AG04449 (cell line): ENCODE measurements at regions of chr15 and their contacts with region 1.

Region 1: DNA sequence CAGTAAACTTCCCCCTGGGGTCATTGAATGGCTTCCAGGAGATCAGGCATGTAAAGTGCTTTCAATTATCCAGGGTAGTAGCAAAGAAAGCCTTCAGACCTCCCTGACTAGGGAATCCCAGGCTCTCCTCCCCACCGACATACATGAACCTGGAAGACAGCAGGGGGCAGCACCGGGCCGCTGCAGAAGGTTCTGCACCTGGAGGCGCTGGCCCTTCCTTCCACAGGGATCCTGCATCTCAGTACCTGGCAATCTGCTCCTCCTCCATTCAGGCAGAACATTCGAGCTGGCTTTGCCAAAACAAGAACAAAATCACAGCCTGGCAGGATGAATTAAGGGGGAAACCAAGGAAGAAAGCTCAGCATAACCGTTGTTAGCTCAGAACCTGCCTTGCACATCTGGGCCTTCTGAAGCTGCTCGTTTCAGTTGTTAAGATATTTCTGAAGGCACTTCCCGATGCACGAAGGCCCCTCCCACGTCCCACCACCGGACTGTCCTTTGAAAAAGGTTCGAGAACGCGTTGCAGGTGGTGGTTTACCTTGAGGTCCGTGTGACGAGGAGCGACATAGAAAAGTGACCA is 237.7 kb downstream of the SLCO3A1 start:
- DNase-seq: no peak
- H3K4me3 ChIP-seq: no peak overlapping the region
- CTCF ChIP-seq: peak; percentile 78

Region 2: DNA sequence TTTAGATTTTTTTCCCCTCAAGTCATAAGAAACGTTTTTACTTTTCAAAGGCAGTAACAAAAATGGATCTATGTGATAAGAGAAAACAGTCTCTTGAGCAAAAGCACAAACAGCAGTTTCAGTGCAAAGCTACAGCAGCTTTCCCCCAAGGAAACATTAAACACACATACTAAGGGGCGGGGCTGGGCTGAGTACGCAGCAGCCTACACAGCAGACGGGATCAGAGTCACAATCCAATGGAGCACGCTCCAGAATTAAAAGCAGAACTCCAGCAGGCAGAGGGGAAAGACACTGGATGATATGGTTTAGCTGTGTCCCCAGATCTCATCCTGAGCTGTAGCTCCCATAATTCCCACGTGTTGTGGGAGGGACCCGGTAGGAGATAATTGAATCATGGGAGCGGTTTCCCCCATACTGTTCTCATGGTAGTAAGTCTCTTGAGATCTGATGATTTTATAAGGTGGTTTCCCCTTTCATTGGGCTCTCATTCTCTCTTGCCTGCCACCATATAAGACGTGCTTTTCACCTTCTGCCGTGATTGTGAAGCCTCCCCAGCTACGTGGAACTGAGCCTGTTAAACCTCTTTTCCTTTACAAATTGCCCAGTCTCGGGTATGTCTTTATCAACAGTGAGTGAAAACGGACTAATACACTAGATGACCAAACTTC is 354.0 kb before region 1 on chr15:
- CTCF ChIA-PET with region 1: no interaction called
- POLR2A ChIA-PET with region 1: no interaction called
- DNase-seq: no peak
- H3K4me3 ChIP-seq: no peak overlapping the region
- CTCF ChIP-seq: no peak

Region 3: GRCh38 chr15:92077353-92078085 is 13.7 kb before region 1 on chr15:
- CTCF ChIA-PET with region 1: interaction called, 17 read pairs
- POLR2A ChIA-PET with region 1: no interaction called
- DNase-seq: no peak
- H3K4me3 ChIP-seq: no peak overlapping the region
- CTCF ChIP-seq: peak; percentile 82

Region 4: GRCh38 chr15:92122259-92122658 is 31.0 kb after region 1 on chr15:
- CTCF ChIA-PET with region 1: no interaction called
- POLR2A ChIA-PET with region 1: no interaction called
- DNase-seq: no peak
- H3K4me3 ChIP-seq: no peak overlapping the region
- CTCF ChIP-seq: no peak

Region 5: GRCh38 chr15:92226014-92226612 is 134.9 kb after region 1 on chr15:
- CTCF ChIA-PET with region 1: interaction called, 44 read pairs
- POLR2A ChIA-PET with region 1: no interaction called
- DNase-seq: no peak
- H3K4me3 ChIP-seq: no peak overlapping the region
- CTCF ChIP-seq: peak; percentile 38